ENCODE measurements at regions of chr14 and their contacts with region 1.

Region 1: DNA sequence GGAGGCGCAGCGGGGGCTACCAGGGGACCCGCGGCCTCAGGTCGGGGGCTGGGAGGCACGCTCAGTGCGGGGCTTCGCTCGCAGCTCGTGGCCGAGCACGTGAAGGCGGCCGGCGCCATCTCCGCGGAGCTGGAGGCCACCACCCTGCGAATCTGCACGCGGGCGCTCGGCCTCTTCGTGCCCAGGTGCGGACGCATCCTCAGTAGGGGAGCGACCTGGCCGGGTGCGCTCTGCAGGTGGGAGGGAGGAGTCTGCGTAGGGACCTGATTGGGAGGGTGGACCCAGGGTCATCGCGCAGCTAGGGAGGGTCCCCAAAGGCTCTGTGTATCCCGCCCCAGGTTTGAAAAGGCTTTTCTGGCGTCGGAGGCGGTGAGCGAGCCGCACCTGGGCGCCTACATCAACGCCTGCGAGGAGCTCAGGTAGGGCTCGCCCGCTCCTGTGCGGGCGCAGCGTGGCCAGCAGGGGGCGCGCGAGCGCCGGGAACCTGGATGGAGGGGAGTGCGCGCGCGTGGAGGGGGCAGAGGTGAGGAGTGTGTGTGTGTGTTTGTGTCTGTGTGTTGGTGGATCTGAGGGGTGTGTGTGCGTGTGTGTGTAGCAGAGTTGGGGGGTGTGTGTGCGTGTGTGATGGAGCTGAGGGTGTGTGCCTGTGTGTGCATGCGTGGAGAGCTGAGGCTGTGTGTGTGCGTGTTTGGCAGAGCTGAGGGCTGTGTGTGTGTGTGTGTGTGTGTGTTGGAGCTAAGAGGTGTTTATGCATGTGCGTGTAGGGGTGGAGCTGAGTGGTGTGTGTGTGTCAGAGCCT is 10.3 kb downstream of the EXOC3L4 start:
- DNase-seq: peak in 1 of 2 donors; percentile 71
- H3K4me3 ChIP-seq: peak overlapping the region in 2 of 3 donors; percentile 19 to 55
- H3K27ac ChIP-seq: no peak overlapping the region
- H3K4me1 ChIP-seq: peaks cover 4 to 6% of the 10 kb centered on the region in 2 donors
- H3K27me3 ChIP-seq: peaks cover 15 to 33% of the 10 kb centered on the region in 2 donors
- CTCF ChIP-seq: peak; percentile 94 to 99 (median 98)
- POLR2A ChIP-seq: no peak

Region 2: GRCh38 chr14:103292426-103293374 is 187.8 kb after region 1 on chr14:
- intact Hi-C with region 1: loop called (anchors 10 kb)
- DNase-seq: peak; percentile 59 to 74
- H3K4me3 ChIP-seq: no peak overlapping the region
- H3K27ac ChIP-seq: no peak overlapping the region
- H3K4me1 ChIP-seq: no peaks in the 10 kb centered on the region
- H3K27me3 ChIP-seq: peaks cover 0 to 4% of the 10 kb centered on the region in 2 donors
- CTCF ChIP-seq: peak; percentile 90 to 96 (median 92)
- POLR2A ChIP-seq: no peak

Measured in breast epithelium (tissue), 4 donors.